GM12878 (cell line): ENCODE measurements at regions of chr1 and their contacts with region 1.

Region 1: GRCh38 chr1:161071886-161072371 is 2.2 kb upstream of the ARHGAP30 start:
- DNase-seq: no peak
- ATAC-seq: no peak
- H3K4me3 ChIP-seq: no peak overlapping the region
- H3K27ac ChIP-seq: no peak overlapping the region
- H3K4me1 ChIP-seq: peaks cover 16% of the 10 kb centered on the region
- H3K27me3 ChIP-seq: no peaks in the 10 kb centered on the region
- CTCF ChIP-seq: peak; percentile 68 to 75 (median 72)
- EP300 ChIP-seq: no peak
- POLR2A ChIP-seq: no peak
- RAD21 ChIP-seq: peak; percentile 78

Region 2: DNA sequence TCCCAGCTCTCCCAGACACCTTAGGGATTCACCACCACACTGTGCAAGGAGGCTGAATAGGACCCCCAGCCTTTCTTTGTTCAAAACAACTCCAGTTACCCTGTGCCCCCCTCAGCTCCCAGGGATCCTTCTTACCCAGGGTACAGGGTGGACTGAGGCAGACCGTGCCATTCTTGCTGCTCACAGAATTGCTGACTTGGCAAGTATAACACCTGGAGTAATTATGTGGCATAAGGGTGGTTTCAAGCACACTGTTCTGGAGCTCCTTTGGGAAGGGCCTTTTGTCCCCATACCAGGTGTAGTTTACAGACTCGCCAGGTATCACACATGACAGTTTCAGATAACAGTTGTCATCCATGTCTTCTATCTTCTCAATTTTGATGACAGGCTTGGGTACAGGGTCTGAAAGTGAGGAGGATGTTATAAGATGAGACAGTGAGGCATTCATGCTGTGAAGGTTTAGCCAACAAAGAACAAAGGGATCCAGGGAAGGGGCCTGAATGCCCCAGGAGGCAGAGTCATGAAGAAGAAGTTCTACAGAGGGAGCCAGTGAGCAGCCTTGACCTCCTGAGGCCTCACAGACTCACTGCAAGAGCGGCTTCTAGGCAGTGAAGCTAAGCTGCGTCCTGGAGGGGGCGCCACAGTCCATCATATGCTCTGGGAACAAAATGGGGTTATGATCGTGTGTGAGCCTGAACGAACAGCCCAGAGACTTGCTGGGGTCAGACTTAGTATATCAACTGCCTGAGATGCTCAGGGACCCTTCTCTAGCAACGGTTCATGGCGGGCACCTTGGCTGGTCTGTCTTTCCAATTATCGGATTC is 390.6 kb before region 1 on chr1:
- CTCF ChIA-PET with region 1: no interaction called
- POLR2A ChIA-PET with region 1: no interaction called
- RAD21 ChIA-PET with region 1: no interaction called
- SMC1A ChIA-PET with region 1: no interaction called
- in situ Hi-C with region 1: no loop called
- intact Hi-C with region 1: no loop called
- DNase-seq: no peak
- ATAC-seq: peak; percentile 89
- H3K4me3 ChIP-seq: no peak overlapping the region
- H3K27ac ChIP-seq: peak overlapping the region; percentile 14; the same call in 1 of the 2 replicates
- H3K4me1 ChIP-seq: peaks cover 38% of the 10 kb centered on the region
- H3K27me3 ChIP-seq: no peaks in the 10 kb centered on the region
- CTCF ChIP-seq: peak; percentile 85 to 97 (median 95); a peak in 5 of 6 replicates
- EP300 ChIP-seq: no peak
- POLR2A ChIP-seq: peak; percentile 61; the same call in 1 of the 2 replicates
- RAD21 ChIP-seq: peak; percentile 91

Region 3: DNA sequence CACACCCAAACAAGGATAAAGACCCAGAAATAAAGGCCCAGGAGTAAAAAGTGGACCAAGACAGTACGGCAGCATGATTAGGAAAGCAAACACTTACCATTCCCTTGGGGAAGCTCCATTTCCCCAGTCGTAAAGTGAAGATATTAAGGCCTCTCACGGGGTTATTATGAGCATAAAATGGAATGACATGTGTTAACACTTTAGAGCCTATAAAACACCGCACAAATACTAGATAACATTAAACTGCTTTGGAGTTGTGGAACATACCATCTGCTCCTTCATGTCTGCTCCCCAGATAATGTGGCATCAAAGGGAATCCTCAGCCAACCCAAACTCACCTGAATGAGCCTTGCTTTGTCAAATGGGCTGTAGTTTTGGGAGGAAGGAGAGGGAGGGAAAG is 108.4 kb before region 1 on chr1:
- CTCF ChIA-PET with region 1: no interaction called
- POLR2A ChIA-PET with region 1: no interaction called
- RAD21 ChIA-PET with region 1: no interaction called
- SMC1A ChIA-PET with region 1: no interaction called
- in situ Hi-C with region 1: no loop called
- intact Hi-C with region 1: no loop called
- DNase-seq: no peak
- ATAC-seq: no peak
- H3K4me3 ChIP-seq: no peak overlapping the region
- H3K27ac ChIP-seq: no peak overlapping the region
- H3K4me1 ChIP-seq: no peaks in the 10 kb centered on the region
- H3K27me3 ChIP-seq: no peaks in the 10 kb centered on the region
- CTCF ChIP-seq: no peak
- EP300 ChIP-seq: no peak
- POLR2A ChIP-seq: no peak
- RAD21 ChIP-seq: no peak

Region 4: GRCh38 chr1:160997323-160998038 is 74.4 kb before region 1 on chr1:
- CTCF ChIA-PET with region 1: interaction called, 36 read pairs
- POLR2A ChIA-PET with region 1: interaction called, 5 read pairs
- RAD21 ChIA-PET with region 1: interaction called, 13 read pairs
- SMC1A ChIA-PET with region 1: interaction called, 24 read pairs
- in situ Hi-C with region 1: no loop called
- intact Hi-C with region 1: loop called (anchors 2 kb)
- DNase-seq: no peak
- ATAC-seq: peak; percentile 93
- H3K4me3 ChIP-seq: no peak overlapping the region
- H3K27ac ChIP-seq: peak overlapping the region; percentile 33; the same call in 1 of the 2 replicates
- H3K4me1 ChIP-seq: peaks cover 3% of the 10 kb centered on the region; the same call in 1 of the 2 replicates
- H3K27me3 ChIP-seq: no peaks in the 10 kb centered on the region
- CTCF ChIP-seq: peak; percentile 65 to 80 (median 72)
- EP300 ChIP-seq: no peak
- POLR2A ChIP-seq: no peak
- RAD21 ChIP-seq: peak; percentile 85

Region 5: GRCh38 chr1:161021165-161021960 is 50.6 kb before region 1 on chr1:
- CTCF ChIA-PET with region 1: interaction called, 13 read pairs
- POLR2A ChIA-PET with region 1: interaction called, 18 read pairs
- RAD21 ChIA-PET with region 1: interaction called, 40 read pairs
- SMC1A ChIA-PET with region 1: interaction called, 12 read pairs
- in situ Hi-C with region 1: no loop called
- intact Hi-C with region 1: no loop called
- DNase-seq: peak; percentile 66
- ATAC-seq: peak; percentile 96
- H3K4me3 ChIP-seq: peak overlapping the region; percentile 75
- H3K27ac ChIP-seq: peak overlapping the region; percentile 33
- H3K4me1 ChIP-seq: peaks cover 19% of the 10 kb centered on the region
- H3K27me3 ChIP-seq: no peaks in the 10 kb centered on the region
- CTCF ChIP-seq: no peak
- EP300 ChIP-seq: no peak
- POLR2A ChIP-seq: peak; percentile 69; the same call in 1 of the 2 replicates
- RAD21 ChIP-seq: no peak

Region 6: DNA sequence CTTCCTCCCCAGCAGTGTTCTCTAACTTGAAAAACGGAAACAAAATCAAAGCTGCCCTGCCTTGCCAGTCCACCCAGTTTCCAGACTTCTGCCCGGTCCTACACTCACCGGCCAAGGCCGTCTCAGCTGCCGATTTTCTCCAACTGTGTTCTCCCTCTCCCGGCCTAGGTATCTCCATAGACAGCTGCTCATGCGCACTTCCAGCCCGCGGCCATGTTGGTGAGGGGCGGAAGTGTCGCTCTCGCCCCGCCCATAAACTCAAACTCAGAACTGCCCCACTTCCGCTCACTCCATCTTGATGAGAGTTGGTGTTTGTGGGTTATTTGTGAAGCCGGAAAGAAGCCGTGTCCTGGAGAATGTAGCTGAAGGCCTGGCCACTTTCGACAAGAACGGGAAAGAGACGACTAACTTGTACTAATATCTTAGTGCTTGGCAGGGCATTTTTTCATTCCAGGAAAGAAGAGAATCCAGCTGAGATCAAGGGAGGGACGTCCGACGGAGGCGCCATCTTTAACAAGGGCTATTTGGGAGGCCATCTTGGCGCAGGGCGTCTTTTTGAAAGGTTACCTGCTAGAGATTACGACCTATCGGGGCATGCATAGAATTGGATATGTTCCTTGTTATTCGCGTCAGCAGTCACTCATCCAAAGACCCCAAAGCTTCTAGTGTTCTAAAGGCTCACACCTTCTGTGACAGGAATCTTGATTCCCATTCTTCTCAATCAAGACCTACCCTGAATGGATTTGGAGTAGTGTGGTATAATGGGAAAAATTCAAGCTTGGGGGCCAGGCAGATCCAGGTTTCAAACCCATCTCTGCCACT is 26.0 kb before region 1 on chr1 and contains the start of gene USF1:
- CTCF ChIA-PET with region 1: interaction called, 84 read pairs
- POLR2A ChIA-PET with region 1: interaction called, 139 read pairs
- RAD21 ChIA-PET with region 1: interaction called, 107 read pairs
- SMC1A ChIA-PET with region 1: interaction called, 134 read pairs
- in situ Hi-C with region 1: no loop called
- intact Hi-C with region 1: loop called (anchors 1 kb)
- DNase-seq: peak; percentile 92
- ATAC-seq: peak; percentile 86
- H3K4me3 ChIP-seq: peak within 1 kb of the TSS; percentile 90
- H3K27ac ChIP-seq: peak within 1 kb of the TSS; percentile 100
- H3K4me1 ChIP-seq: peaks cover 15% of the 10 kb centered on the region
- H3K27me3 ChIP-seq: no peaks in the 10 kb centered on the region
- CTCF ChIP-seq: no peak
- EP300 ChIP-seq: no peak
- POLR2A ChIP-seq: peak; percentile 90
- RAD21 ChIP-seq: no peak
- polyA plus RNA-seq, gene USF1: 9.4 to 26.3 TPM

Region 7: GRCh38 chr1:161132410-161133219 is 60.7 kb after region 1 on chr1 and contains the start of gene DEDD:
- CTCF ChIA-PET with region 1: interaction called, 52 read pairs
- POLR2A ChIA-PET with region 1: interaction called, 8 read pairs
- RAD21 ChIA-PET with region 1: interaction called, 15 read pairs
- SMC1A ChIA-PET with region 1: interaction called, 15 read pairs
- in situ Hi-C with region 1: no loop called
- intact Hi-C with region 1: loop called (anchors 2 kb)
- DNase-seq: peak; percentile 87
- ATAC-seq: peak; percentile 98
- H3K4me3 ChIP-seq: peak within 1 kb of the TSS; percentile 93
- H3K27ac ChIP-seq: peak within 1 kb of the TSS; percentile 79
- H3K4me1 ChIP-seq: peaks cover 3% of the 10 kb centered on the region
- H3K27me3 ChIP-seq: no peaks in the 10 kb centered on the region
- CTCF ChIP-seq: no peak
- EP300 ChIP-seq: peak in 1 of 2 experiments; percentile 51; a peak in 2 of 4 replicates
- POLR2A ChIP-seq: peak; percentile 85
- RAD21 ChIP-seq: no peak
- polyA plus RNA-seq, gene DEDD: 25.5 to 30.0 TPM

Region 8: DNA sequence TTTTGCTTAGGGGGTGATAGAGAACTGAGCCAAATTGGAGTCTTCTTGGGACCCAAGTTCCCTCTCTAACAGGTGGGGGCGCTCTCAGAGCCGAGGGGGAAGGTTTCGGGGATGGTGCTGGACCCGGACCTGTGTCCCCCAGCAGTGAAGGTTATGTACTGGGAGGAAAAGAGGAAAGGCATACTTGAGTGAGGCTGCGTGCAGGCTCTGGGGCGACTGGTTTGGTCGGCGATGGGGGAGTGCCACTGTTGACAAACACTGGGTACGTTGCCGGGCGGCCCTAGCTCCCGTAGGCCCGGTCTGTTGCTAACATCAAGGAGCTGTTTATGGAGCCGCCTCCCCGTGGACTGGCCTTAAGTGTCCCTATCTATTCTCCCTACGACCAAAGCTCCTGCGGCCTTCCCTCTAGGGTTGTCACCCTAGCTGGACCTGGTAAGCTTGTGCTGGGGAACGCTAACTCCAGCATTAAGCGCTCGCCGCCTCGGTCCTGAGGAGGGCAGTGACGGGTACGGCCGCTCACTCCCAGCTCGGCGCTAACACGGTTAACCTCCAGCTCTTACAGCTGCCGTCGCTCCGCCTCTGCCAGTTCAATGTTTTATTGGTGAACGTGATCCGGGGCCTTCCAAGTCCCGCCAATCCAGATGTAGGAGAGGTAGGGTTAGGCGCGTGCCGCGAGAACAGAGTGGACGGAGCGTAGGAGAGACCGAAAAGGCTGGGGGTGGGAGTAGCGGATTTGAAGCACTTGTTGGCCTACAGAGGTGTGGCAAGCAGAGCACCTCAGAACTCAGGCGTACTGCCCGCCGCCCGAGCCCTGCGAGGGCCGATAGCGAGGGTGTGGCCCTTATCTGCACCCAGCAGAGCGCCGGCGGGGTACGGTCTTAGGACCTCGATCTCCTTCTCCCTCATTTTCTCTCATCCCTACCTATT is 94.1 kb after region 1 on chr1 and contains the start of gene PPOX:
- CTCF ChIA-PET with region 1: no interaction called
- POLR2A ChIA-PET with region 1: interaction called, 10 read pairs
- RAD21 ChIA-PET with region 1: interaction called, 3 read pairs
- SMC1A ChIA-PET with region 1: no interaction called
- in situ Hi-C with region 1: no loop called
- intact Hi-C with region 1: no loop called
- DNase-seq: peak; percentile 92
- ATAC-seq: peak; percentile 97
- H3K4me3 ChIP-seq: peak within 1 kb of the TSS; percentile 86
- H3K27ac ChIP-seq: peak within 1 kb of the TSS; percentile 54
- H3K4me1 ChIP-seq: peaks cover 8% of the 10 kb centered on the region
- H3K27me3 ChIP-seq: no peaks in the 10 kb centered on the region
- CTCF ChIP-seq: peak; percentile 50 to 67 (median 61)
- EP300 ChIP-seq: no peak; a peak in 1 of 4 replicates
- POLR2A ChIP-seq: peak; percentile 88
- RAD21 ChIP-seq: peak; percentile 26; the same call in 1 of the 2 replicates
- polyA plus RNA-seq, gene PPOX: 8.9 to 16.3 TPM

Region 9: DNA sequence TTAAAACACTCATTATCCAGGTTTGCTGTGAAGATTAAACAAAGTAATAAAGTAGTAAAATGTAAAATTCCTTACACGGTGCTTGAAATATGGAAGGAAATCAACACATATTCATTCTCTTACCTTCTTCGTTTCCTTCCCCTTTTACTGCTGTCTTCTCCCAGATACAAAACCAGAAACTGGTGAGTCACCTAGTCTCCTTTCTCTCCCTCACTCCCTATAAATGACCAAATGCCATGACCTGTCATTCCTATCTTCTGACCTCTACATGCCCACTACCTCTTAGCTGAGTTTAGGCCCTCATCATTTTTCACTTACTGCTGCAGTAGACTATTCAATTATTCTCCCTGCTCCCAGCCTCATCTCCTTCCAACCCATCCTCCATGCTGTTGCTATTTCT is 170.4 kb after region 1 on chr1:
- CTCF ChIA-PET with region 1: no interaction called
- POLR2A ChIA-PET with region 1: no interaction called
- RAD21 ChIA-PET with region 1: no interaction called
- SMC1A ChIA-PET with region 1: no interaction called
- in situ Hi-C with region 1: no loop called
- intact Hi-C with region 1: no loop called
- DNase-seq: no peak
- ATAC-seq: no peak
- H3K4me3 ChIP-seq: no peak overlapping the region
- H3K27ac ChIP-seq: no peak overlapping the region
- H3K4me1 ChIP-seq: no peaks in the 10 kb centered on the region
- H3K27me3 ChIP-seq: no peaks in the 10 kb centered on the region
- CTCF ChIP-seq: no peak
- EP300 ChIP-seq: no peak
- POLR2A ChIP-seq: no peak
- RAD21 ChIP-seq: no peak